ENCODE measurements at regions of chr10 and their contacts with region 1.

Region 1: GRCh38 chr10:128069351-128070051 is 56.7 kb downstream of the MKI67 start:
- DNase-seq: peak; percentile 87
- ATAC-seq: peak; percentile 43
- H3K4me3 Mint-ChIP-seq: no peak overlapping the region
- H3K27ac Mint-ChIP-seq: no peak overlapping the region
- H3K4me1 Mint-ChIP-seq: peaks cover 50% of the 10 kb centered on the region
- H3K27me3 Mint-ChIP-seq: no peaks in the 10 kb centered on the region

Region 2: DNA sequence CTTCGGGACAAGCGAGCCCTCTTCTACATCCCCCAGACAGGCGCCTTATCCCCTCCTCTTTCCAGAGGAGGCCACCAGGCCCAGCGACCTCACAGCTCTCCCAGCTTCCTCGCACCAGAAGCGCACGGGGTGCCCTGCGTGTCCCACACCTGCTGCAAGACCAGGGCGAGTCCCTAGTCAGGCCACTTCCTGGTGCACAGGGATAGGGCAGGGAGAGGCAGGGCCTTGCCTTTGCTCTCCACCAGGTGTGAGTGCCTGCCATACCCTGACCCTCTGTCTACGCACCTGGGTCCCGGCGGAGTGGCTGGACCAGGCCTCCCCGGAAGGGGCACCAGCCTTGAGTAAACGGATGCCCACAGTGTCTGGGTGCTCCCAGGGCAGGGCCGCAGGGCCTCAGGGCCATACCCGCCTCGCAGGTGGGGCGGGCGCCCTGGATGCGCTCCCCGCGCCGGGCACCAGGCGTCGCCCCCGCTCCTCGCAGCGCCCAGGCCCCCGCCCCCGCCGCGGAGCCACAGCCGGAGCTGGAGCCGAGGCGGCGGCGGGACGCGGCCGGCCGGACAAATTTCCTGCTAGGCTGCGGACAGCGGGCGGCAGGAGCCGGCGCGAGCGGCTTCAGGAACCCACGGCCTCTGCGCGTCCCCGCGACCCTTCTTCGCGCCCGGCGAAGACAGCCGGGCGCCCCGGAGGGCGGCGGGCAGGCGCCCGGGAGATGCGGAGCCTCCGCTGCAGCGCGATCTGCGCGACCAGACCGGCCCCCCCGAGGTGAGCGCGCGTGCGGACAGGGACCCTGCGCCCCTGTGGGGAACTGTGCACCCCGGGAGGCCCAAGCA is 162.7 kb before region 1 on chr10 and contains the start of gene PTPRE:
- CTCF ChIA-PET with region 1: interaction called, 14 read pairs
- POLR2A ChIA-PET with region 1: interaction called, 3 read pairs
- DNase-seq: peak; percentile 65
- ATAC-seq: peak; percentile 97
- H3K4me3 Mint-ChIP-seq: peak within 1 kb of the TSS; percentile 12
- H3K27ac Mint-ChIP-seq: no peak within 1 kb of the TSS
- H3K4me1 Mint-ChIP-seq: no peaks in the 10 kb centered on the region
- H3K27me3 Mint-ChIP-seq: peaks cover 51% of the 10 kb centered on the region
- total RNA-seq, gene PTPRE: 21.4 to 24.5 TPM

Region 3: GRCh38 chr10:128035557-128035973 is 33.9 kb before region 1 on chr10:
- CTCF ChIA-PET with region 1: interaction called, 181 read pairs
- POLR2A ChIA-PET with region 1: interaction called, 3 read pairs
- DNase-seq: peak; percentile 73
- ATAC-seq: peak; percentile 81
- H3K4me3 Mint-ChIP-seq: no peak overlapping the region
- H3K27ac Mint-ChIP-seq: no peak overlapping the region
- H3K4me1 Mint-ChIP-seq: peaks cover 11% of the 10 kb centered on the region
- H3K27me3 Mint-ChIP-seq: no peaks in the 10 kb centered on the region

Region 4: GRCh38 chr10:128040681-128041080 is 28.8 kb before region 1 on chr10:
- CTCF ChIA-PET with region 1: interaction called, 181 read pairs
- POLR2A ChIA-PET with region 1: interaction called, 3 read pairs
- DNase-seq: no peak
- ATAC-seq: no peak
- H3K4me3 Mint-ChIP-seq: no peak overlapping the region
- H3K27ac Mint-ChIP-seq: no peak overlapping the region
- H3K4me1 Mint-ChIP-seq: peaks cover 8% of the 10 kb centered on the region
- H3K27me3 Mint-ChIP-seq: no peaks in the 10 kb centered on the region

Region 5: GRCh38 chr10:128047351-128047750 is 22.1 kb before region 1 on chr10:
- CTCF ChIA-PET with region 1: interaction called, 65 read pairs
- POLR2A ChIA-PET with region 1: interaction called, 145 read pairs
- DNase-seq: peak; percentile 93
- ATAC-seq: peak; percentile 100
- H3K4me3 Mint-ChIP-seq: peak overlapping the region; percentile 84
- H3K27ac Mint-ChIP-seq: peak overlapping the region; percentile 93
- H3K4me1 Mint-ChIP-seq: peaks cover 53% of the 10 kb centered on the region
- H3K27me3 Mint-ChIP-seq: no peaks in the 10 kb centered on the region

Region 6: GRCh38 chr10:128150045-128150493 is 80.6 kb after region 1 on chr10:
- CTCF ChIA-PET with region 1: interaction called, 11 read pairs
- POLR2A ChIA-PET with region 1: interaction called, 4 read pairs
- DNase-seq: peak; percentile 83
- ATAC-seq: peak; percentile 98
- H3K4me3 Mint-ChIP-seq: peak overlapping the region; percentile 71
- H3K27ac Mint-ChIP-seq: no peak overlapping the region
- H3K4me1 Mint-ChIP-seq: peaks cover 23% of the 10 kb centered on the region
- H3K27me3 Mint-ChIP-seq: peaks cover 2% of the 10 kb centered on the region

Measured in activated CD8-positive, alpha-beta T cell treated with anti-CD3 and anti-CD28 coated beads, Interleukin-2, amount 10 ng/mL, durations not matched to agents 7 days and 5 days (primary cell).